Right cardiac atrium (tissue), 5 donors: ENCODE measurements at regions of chr3 and their contacts with region 1.

Region 1: GRCh38 chr3:159804726-159805410 is 183.8 kb upstream of the IL12A start:
- DNase-seq: peak; percentile 54 to 75 (median 64)
- ATAC-seq: peak; percentile 94
- H3K4me3 ChIP-seq: no peak overlapping the region
- H3K27ac ChIP-seq: no peak overlapping the region
- H3K4me1 ChIP-seq: no peaks in the 10 kb centered on the region
- H3K27me3 ChIP-seq: no peaks in the 10 kb centered on the region

Region 2: DNA sequence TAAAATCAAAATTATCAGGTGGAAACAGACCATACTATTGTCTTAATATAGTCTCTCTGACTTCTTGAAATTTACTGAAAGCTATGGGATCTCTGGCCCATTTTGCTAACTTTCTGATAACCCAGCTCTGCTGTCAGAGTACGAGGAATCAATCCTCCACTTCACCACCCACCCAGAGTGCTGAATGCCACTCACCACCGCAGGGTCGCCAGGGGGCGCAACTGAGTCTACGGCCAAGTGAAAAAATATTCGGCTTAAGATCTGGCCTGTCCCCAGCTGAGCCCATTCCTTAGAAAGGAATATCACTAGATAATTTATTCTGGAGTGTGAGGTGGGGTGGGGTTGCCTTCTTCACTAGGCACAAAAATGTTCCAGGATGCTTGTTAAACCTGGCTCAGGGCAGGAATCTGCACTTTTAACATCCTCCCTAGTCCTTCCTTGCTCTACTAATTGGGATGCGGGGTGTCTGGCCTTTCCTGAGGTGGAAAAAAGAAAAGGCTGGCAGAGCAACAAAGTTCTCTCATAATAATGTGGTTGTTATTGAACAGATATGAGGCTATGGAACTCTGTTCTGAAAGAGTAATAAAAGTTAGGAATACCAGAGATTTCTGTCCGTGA is 482.4 kb before region 1 on chr3:
- intact Hi-C with region 1: loop called in 1 of 4 experiments (anchors 10 kb)
- DNase-seq: peak; percentile 20 to 74 (median 69)
- ATAC-seq: no peak
- H3K4me3 ChIP-seq: no peak overlapping the region
- H3K27ac ChIP-seq: no peak overlapping the region
- H3K4me1 ChIP-seq: no peaks in the 10 kb centered on the region
- H3K27me3 ChIP-seq: no peaks in the 10 kb centered on the region

Region 3: GRCh38 chr3:159616212-159616825 is 188.5 kb before region 1 on chr3:
- intact Hi-C with region 1: loop called (anchors 2 to 10 kb)
- DNase-seq: peak; percentile 24 to 69 (median 69)
- ATAC-seq: peak; percentile 55 to 65
- H3K4me3 ChIP-seq: no peak overlapping the region
- H3K27ac ChIP-seq: no peak overlapping the region
- H3K4me1 ChIP-seq: peaks cover 3% of the 10 kb centered on the region
- H3K27me3 ChIP-seq: no peaks in the 10 kb centered on the region

Region 4: DNA sequence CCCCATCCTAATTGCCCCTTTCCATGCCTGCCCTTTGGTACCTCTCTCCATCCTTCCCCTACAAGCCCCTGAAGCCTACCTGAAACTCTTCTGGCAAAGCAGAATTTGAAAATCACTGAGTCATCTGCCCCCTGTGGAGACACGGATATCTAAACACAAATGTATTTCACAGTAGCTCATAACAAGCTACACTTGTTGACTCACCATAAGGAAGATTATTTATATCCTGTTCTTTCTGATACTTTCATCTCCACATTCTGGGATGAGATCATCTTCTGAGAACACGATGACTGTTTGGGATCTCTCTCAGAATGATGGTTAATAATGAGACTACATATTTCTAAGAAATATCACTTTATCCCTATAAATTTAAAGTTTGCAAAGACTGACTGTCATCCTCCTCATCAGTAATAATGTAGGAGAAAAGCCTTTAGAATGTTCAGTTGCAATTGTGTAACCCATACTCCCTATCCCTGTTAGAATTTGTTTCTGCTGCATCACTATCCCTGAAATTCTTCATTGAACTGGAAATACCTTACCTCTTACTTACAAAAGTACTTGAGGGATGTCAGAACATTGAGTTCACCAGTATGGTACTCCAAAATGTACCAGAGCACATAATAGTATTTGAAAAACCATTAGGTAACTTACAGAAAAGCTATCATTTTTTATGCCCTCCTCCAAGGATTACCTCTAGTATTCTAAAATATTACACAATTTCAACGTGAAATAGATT is 67.7 kb after region 1 on chr3:
- intact Hi-C with region 1: no loop called
- DNase-seq: no peak
- ATAC-seq: peak; percentile 14 to 48
- H3K4me3 ChIP-seq: no peak overlapping the region
- H3K27ac ChIP-seq: peak overlapping the region; percentile 50
- H3K4me1 ChIP-seq: no peaks in the 10 kb centered on the region
- H3K27me3 ChIP-seq: no peaks in the 10 kb centered on the region